AG04450 (cell line): ENCODE measurements at regions of chr13 and their contacts with region 1.

Region 1: DNA sequence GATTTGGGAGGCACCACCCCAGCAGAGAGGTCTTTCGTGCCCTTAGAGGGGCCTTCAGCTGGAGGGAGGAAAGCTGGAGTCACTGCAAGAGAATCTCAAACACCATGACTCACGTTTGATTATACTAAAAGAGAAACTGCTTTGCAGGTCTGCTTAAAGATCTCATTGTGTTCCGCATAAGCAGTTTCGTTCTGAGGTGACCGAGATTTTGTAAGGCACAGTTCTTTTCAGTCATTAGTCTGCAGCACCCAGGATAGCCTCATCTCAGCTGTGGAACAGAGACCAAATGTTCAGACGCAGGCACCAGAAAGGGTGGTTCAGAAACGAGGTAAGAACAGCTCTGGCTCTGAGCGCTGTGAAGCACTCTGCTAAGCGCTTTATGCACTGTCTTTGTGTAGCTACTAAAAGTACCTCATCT is 71.2 kb upstream of the GTF3A start:
- DNase-seq: peak; percentile 29
- H3K4me3 ChIP-seq: peak overlapping the region; percentile 48
- H3K27ac ChIP-seq: peak overlapping the region; percentile 82
- H3K27me3 ChIP-seq: no peaks in the 10 kb centered on the region
- CTCF ChIP-seq: no peak

Region 2: GRCh38 chr13:27270594-27271520 is 82.3 kb before region 1 on chr13 and contains the start of gene RASL11A:
- CTCF ChIA-PET with region 1: interaction called, 7 read pairs
- POLR2A ChIA-PET with region 1: interaction called, 12 read pairs
- DNase-seq: peak; percentile 82
- H3K4me3 ChIP-seq: peak within 1 kb of the TSS; percentile 84
- H3K27ac ChIP-seq: peak within 1 kb of the TSS; percentile 73
- H3K27me3 ChIP-seq: peaks cover 3% of the 10 kb centered on the region
- CTCF ChIP-seq: peak; percentile 73
- polyA plus RNA-seq, gene RASL11A: 13.5 and 14.4 TPM in 2 replicates

Region 3: GRCh38 chr13:27415116-27415515 is 61.9 kb after region 1 on chr13:
- CTCF ChIA-PET with region 1: no interaction called
- POLR2A ChIA-PET with region 1: no interaction called
- DNase-seq: no peak
- H3K4me3 ChIP-seq: no peak overlapping the region
- H3K27ac ChIP-seq: no peak overlapping the region
- H3K27me3 ChIP-seq: peaks cover 37% of the 10 kb centered on the region
- CTCF ChIP-seq: no peak